Mammary epithelial cell (primary cell): ENCODE measurements at regions of chr4 and their contacts with region 1.

Region 1: DNA sequence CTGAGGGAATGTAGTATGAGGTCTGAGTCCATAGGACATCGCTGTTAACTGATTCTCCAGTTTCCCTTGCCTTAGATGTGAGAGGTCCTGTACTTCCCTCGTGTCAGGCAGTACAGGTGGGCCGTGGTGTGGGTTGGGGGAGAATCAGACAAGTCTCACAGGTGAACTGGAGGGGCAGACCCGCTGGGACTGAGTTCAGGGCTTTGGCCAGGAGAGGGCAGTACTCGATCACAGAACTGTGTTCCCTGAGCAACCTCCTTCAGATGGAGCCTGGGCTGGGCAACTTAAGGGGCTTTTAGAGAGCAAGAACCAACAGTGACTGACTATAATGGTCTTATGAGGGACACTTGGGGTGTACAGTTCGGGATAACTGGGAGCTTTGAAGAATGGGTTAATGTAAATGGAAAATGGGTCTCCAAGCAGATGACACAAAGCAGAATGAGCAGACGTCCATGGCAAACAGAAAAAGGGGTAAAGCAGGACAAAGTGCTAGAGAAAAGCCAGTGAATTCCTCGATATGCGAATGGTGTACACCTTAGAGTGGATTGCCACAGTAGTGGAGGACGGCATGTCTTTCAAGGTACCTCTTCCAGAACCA is 83.6 kb downstream of the CCNG2 start:
- DNase-seq: peak; percentile 28
- H3K4me3 ChIP-seq: no peak overlapping the region
- H3K27ac ChIP-seq: no peak overlapping the region
- H3K4me1 ChIP-seq: no peaks in the 10 kb centered on the region
- H3K27me3 ChIP-seq: no peaks in the 10 kb centered on the region
- CTCF ChIP-seq: peak; percentile 91 to 93

Region 2: GRCh38 chr4:77358315-77358928 is 117.9 kb after region 1 on chr4:
- CTCF ChIA-PET with region 1: interaction called, 3 read pairs
- dilution Hi-C with region 1: no loop called
- in situ Hi-C with region 1: loop called (anchors 5 kb)
- intact Hi-C with region 1: loop called (anchors 1 kb)
- DNase-seq: peak; percentile 37
- H3K4me3 ChIP-seq: no peak overlapping the region
- H3K27ac ChIP-seq: no peak overlapping the region
- H3K4me1 ChIP-seq: peaks cover 10% of the 10 kb centered on the region
- H3K27me3 ChIP-seq: no peaks in the 10 kb centered on the region
- CTCF ChIP-seq: peak; percentile 53 to 74

Region 3: GRCh38 chr4:77433418-77433733 is 192.8 kb after region 1 on chr4:
- CTCF ChIA-PET with region 1: no interaction called
- dilution Hi-C with region 1: no loop called
- in situ Hi-C with region 1: no loop called
- intact Hi-C with region 1: loop called (anchors 5 kb)
- DNase-seq: peak; percentile 44
- H3K4me3 ChIP-seq: no peak overlapping the region
- H3K27ac ChIP-seq: no peak overlapping the region
- H3K4me1 ChIP-seq: no peaks in the 10 kb centered on the region
- H3K27me3 ChIP-seq: no peaks in the 10 kb centered on the region
- CTCF ChIP-seq: peak; percentile 46 to 66